ENCODE measurements at regions of chr5 and their contacts with region 1.

Region 1: GRCh38 chr5:72955768-72956323 is at the start of gene FCHO2:
- DNase-seq: peak; percentile 92 to 100 (median 98)

Region 2: DNA sequence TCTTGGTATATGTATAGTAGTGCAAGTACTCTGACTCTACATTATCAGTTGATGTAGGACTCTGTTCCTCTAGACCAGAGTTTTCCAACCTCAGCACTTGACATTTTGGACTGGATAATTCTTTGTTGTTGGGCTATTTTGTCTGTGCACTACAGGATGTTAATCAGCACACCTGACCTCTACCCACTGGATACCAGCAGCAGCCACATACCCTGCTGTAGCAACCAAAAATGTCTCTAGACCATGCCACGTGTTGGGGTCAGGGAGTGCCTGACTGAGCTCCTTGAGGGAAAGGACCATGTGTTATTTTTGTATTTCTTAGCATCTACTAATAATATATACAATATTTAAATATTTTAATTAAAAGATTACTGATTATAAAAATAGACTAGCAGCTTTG is 96.7 kb before region 1 on chr5:
- intact Hi-C with region 1: loop called (anchors 10 kb)
- DNase-seq: no peak

Region 3: DNA sequence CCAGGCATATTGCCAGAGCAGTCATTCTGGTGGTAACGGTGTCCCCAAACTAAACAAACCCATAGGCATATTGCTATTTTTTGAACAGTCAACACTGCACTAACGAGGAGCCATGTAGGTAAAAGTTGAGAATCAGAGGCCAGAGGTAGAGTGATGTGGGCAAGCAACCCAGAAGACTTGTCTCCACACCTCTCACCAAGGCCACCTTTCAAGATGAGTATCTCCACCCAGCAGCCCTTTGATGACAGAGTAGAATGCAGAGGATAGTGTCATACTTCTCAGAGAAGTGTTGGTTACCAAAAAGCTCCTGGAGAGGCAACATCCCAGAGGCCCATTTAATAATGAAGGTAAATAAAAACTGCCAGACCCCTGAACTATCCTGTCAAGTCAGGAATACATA is 63.9 kb after region 1 on chr5:
- intact Hi-C with region 1: no loop called
- DNase-seq: no peak

Region 4: GRCh38 chr5:73088026-73088425 is 132.2 kb after region 1 on chr5:
- intact Hi-C with region 1: loop called (anchors 10 kb)
- DNase-seq: no peak

Measured in head of caudate nucleus (tissue), 42 donors.